CD8-positive, alpha-beta T cell (primary cell): ENCODE measurements at regions of chr12 and their contacts with region 1.

Region 1: DNA sequence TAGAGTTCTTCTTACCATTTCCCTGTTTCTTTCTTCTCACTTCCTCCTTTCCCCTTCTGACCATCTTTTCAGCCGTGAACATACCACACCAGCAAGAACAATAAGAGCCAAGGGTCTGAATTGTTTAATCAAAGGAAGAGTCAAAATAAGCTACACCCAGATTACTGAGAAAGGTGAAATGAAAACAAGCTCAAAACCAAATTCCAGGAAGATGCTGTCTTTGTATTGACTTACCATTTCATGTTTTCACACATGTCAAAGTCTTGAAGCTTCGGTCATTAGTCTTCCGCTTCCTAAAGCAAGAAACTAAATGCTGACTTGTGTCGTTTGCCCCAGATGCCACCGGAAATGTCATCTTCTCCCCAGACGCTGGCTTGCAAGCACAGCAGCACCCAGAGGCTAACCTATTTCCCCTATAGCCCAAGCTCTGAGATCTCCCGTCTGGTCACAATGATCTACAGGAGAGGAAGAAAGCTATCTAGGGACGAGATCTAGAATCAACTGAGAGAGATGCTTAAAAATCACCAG is 136.5 kb upstream of the AMIGO2 start:
- DNase-seq: peak; percentile 28 to 92 (median 73)
- ATAC-seq: peak; percentile 46
- H3K4me3 ChIP-seq: peak overlapping the region; percentile 75 to 80
- H3K4me3 Mint-ChIP-seq: peak overlapping the region; percentile 95
- H3K27ac ChIP-seq: peak overlapping the region; percentile 74 to 81
- H3K27ac Mint-ChIP-seq: peak overlapping the region; percentile 96
- H3K4me1 ChIP-seq: peaks cover 5% of the 10 kb centered on the region
- H3K4me1 Mint-ChIP-seq: peaks cover 30% of the 10 kb centered on the region
- H3K27me3 ChIP-seq: no peaks in the 10 kb centered on the region
- H3K27me3 Mint-ChIP-seq: no peaks in the 10 kb centered on the region
- CTCF ChIP-seq: no peak

Region 2: DNA sequence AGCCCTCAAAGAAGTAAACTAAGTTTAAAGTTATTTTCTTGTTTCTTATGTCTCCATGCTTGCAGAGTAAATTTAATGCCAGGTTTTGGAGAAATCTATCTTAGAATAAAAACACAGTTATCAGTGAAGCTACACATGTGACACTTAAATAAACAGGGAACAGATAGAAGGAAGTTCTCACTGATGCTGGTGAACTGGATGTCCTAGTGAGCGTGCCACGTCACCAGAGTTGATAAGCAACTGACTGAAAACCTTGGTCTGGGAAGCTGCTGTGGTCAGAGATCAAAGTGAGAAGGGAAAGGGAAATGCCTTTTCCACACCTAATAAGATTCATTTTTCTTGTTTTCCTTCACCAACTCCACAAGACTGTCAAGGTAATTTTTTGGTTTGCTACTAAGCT is 211.6 kb before region 1 on chr12:
- CTCF ChIA-PET with region 1: no interaction called
- POLR2A ChIA-PET with region 1: no interaction called
- intact Hi-C with region 1: no loop called
- DNase-seq: no peak
- ATAC-seq: no peak
- H3K4me3 ChIP-seq: no peak overlapping the region
- H3K4me3 Mint-ChIP-seq: no peak overlapping the region
- H3K27ac ChIP-seq: no peak overlapping the region
- H3K27ac Mint-ChIP-seq: no peak overlapping the region
- H3K4me1 ChIP-seq: no peaks in the 10 kb centered on the region
- H3K4me1 Mint-ChIP-seq: no peaks in the 10 kb centered on the region
- H3K27me3 ChIP-seq: peaks cover 0 to 2% of the 10 kb centered on the region in 2 experiments
- H3K27me3 Mint-ChIP-seq: peaks cover 21% of the 10 kb centered on the region
- CTCF ChIP-seq: no peak

Region 3: DNA sequence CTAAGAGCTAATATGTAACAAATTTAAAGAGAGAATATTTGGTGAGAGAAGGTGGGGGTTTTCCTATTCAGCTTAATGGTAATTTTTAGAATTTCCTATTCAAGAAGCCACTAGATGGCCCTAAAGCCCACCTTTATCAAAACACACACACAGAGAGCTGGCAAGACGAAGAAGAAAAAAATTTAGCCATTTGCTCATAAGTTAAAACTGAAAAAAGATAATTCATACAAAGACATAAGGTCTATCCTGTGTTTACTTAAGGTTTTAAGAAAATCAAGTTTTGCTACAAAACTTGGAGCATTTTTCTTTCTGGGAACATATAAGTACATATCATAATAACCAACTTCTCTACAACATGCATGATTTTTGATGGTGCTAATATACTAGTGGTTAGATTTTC is 183.6 kb before region 1 on chr12:
- CTCF ChIA-PET with region 1: interaction called, 9 read pairs
- POLR2A ChIA-PET with region 1: interaction called, 5 read pairs
- intact Hi-C with region 1: loop called in 1 of 2 experiments (anchors 5 kb)
- DNase-seq: peak in 3 of 9 experiments; percentile 13 to 82 (median 74)
- ATAC-seq: peak; percentile 72
- H3K4me3 ChIP-seq: no peak overlapping the region
- H3K4me3 Mint-ChIP-seq: no peak overlapping the region
- H3K27ac ChIP-seq: no peak overlapping the region
- H3K27ac Mint-ChIP-seq: no peak overlapping the region
- H3K4me1 ChIP-seq: peaks cover 5% of the 10 kb centered on the region
- H3K4me1 Mint-ChIP-seq: peaks cover 29% of the 10 kb centered on the region
- H3K27me3 ChIP-seq: no peaks in the 10 kb centered on the region
- H3K27me3 Mint-ChIP-seq: no peaks in the 10 kb centered on the region
- CTCF ChIP-seq: peak; percentile 74

Region 4: DNA sequence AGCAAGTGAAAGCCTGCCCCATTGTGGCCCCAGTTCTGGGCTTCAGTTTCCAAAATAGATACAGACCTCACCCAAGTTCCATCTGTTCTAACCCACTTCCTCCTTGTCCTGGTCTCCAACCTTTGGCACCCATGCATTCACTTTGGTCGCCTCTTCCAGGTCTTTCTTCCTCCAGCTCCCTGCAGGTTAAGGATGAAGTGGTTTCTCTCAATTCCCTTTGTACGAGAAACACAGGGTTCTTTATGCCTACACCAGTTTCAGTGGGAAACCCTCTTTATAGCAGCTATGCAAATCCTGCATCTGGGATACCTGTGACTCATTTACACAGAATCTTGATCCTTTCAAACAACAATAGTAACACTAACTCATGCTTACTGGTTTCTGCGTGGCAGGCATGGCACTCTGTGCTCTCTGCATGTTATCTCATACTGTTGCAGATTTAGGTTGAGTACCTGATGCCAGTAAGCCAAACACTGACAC is 25.9 kb before region 1 on chr12:
- CTCF ChIA-PET with region 1: interaction called, 13 read pairs
- POLR2A ChIA-PET with region 1: interaction called, 35 read pairs
- intact Hi-C with region 1: no loop called
- DNase-seq: peak in 1 of 9 experiments; percentile 25
- ATAC-seq: no peak
- H3K4me3 ChIP-seq: no peak overlapping the region
- H3K4me3 Mint-ChIP-seq: peak overlapping the region; percentile 63
- H3K27ac ChIP-seq: peak overlapping the region in 1 of 2 experiments; percentile 69
- H3K27ac Mint-ChIP-seq: peak overlapping the region; percentile 89
- H3K4me1 ChIP-seq: peaks cover 85% of the 10 kb centered on the region
- H3K4me1 Mint-ChIP-seq: peaks cover 88% of the 10 kb centered on the region
- H3K27me3 ChIP-seq: no peaks in the 10 kb centered on the region
- H3K27me3 Mint-ChIP-seq: no peaks in the 10 kb centered on the region
- CTCF ChIP-seq: no peak

Region 5: DNA sequence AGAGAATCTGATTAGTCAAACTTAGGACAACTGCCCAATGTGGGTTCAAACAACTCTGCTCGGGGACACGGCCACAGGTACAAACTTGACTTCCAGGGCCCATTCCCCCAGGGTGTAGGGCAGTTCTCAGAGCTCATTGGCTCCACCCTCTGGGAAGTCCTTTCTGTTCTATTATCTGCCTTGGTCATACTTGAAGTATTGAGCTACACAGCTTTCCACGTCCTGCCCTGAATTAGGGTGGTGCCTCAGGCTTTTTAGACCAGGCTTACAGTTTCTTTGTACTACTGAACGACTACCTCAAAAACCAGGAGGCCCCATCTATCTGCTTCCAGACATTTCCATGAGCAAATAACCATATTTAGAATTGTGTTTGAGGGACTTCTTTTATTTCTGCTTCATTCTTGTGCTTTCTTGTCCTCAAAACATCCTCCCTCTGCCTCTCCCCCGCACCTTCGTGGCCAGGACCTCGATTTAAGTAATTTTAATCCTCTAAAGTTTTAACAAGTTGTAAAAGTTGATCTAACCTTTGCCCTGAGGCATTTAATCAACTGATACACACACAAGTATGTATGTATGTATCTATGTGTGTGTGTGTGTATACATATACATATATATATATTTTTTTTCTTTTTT is 145.3 kb after region 1 on chr12:
- CTCF ChIA-PET with region 1: interaction called, 4 read pairs
- POLR2A ChIA-PET with region 1: interaction called, 13 read pairs
- intact Hi-C with region 1: loop called in 1 of 2 experiments (anchors 2 kb)
- DNase-seq: peak in 7 of 9 experiments; percentile 19 to 76 (median 48)
- ATAC-seq: peak; percentile 42
- H3K4me3 ChIP-seq: peak overlapping the region; percentile 36 to 40
- H3K4me3 Mint-ChIP-seq: peak overlapping the region; percentile 79
- H3K27ac ChIP-seq: peak overlapping the region; percentile 64 to 94
- H3K27ac Mint-ChIP-seq: peak overlapping the region; percentile 96
- H3K4me1 ChIP-seq: peaks cover 71% of the 10 kb centered on the region
- H3K4me1 Mint-ChIP-seq: peaks cover 59% of the 10 kb centered on the region
- H3K27me3 ChIP-seq: no peaks in the 10 kb centered on the region
- H3K27me3 Mint-ChIP-seq: no peaks in the 10 kb centered on the region
- CTCF ChIP-seq: no peak

Region 6: GRCh38 chr12:47383942-47384341 is 167.7 kb after region 1 on chr12:
- CTCF ChIA-PET with region 1: no interaction called
- POLR2A ChIA-PET with region 1: no interaction called
- intact Hi-C with region 1: no loop called
- DNase-seq: no peak
- ATAC-seq: no peak
- H3K4me3 ChIP-seq: no peak overlapping the region
- H3K4me3 Mint-ChIP-seq: no peak overlapping the region
- H3K27ac ChIP-seq: no peak overlapping the region
- H3K27ac Mint-ChIP-seq: no peak overlapping the region
- H3K4me1 ChIP-seq: peaks cover 11% of the 10 kb centered on the region
- H3K4me1 Mint-ChIP-seq: peaks cover 61% of the 10 kb centered on the region
- H3K27me3 ChIP-seq: no peaks in the 10 kb centered on the region
- H3K27me3 Mint-ChIP-seq: no peaks in the 10 kb centered on the region
- CTCF ChIP-seq: no peak

Region 7: DNA sequence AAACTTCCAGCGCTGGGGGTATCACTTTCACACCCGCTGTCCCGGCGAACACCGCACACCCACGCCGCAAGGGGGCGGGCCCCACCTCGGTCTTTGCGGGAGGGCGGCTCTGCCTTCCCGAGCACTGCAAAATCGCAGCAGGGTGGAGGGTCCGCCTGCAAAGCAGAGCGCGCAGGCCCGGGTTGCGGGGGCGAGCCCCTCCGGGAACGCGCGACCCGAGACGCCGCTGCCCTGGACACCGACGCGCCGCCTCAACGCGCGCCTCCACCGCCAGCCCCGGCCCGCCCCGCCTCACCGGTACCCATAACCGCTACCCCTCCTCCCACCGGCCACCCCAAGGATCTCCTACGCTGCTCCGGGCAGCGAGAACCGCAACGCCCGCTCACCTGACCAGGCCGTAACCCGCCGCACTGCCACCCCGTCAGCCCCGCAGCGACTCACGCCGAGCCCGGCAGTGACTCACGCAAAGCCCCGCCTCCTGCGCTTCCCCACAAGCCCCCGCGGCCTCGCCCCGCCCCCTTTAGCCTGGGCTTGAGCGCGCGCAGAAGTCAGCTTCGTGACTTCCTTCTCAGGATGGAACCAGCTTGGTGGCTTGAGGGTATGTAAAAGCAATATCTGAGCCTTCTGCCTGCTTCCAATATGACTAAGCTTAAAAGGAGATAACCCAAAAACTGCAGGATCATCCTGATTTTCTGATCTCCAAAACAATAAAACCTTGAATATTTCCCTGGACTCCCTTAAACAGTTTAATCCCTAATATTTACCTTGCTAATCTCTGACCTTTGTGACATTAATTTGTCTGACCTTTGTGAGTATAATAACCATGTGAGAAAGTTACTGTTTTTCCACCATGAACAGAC is 489.6 kb after region 1 on chr12 and contains the start of gene RPAP3:
- CTCF ChIA-PET with region 1: no interaction called
- POLR2A ChIA-PET with region 1: no interaction called
- intact Hi-C with region 1: loop called in 1 of 2 experiments (anchors 10 kb)
- DNase-seq: peak; percentile 92 to 98 (median 97)
- ATAC-seq: peak; percentile 95
- H3K4me3 ChIP-seq: peak within 1 kb of the TSS; percentile 63 to 73
- H3K4me3 Mint-ChIP-seq: peak within 1 kb of the TSS; percentile 91
- H3K27ac ChIP-seq: peak within 1 kb of the TSS; percentile 67 to 88
- H3K27ac Mint-ChIP-seq: peak within 1 kb of the TSS; percentile 96
- H3K4me1 ChIP-seq: peaks cover 48% of the 10 kb centered on the region
- H3K4me1 Mint-ChIP-seq: peaks cover 64% of the 10 kb centered on the region
- H3K27me3 ChIP-seq: no peaks in the 10 kb centered on the region
- H3K27me3 Mint-ChIP-seq: no peaks in the 10 kb centered on the region
- CTCF ChIP-seq: peak; percentile 77
- total RNA-seq, gene RPAP3: 17.3 to 18.3 TPM